GM13977 (cell line): ENCODE measurements at regions of chr9 and their contacts with region 1.

Region 1: DNA sequence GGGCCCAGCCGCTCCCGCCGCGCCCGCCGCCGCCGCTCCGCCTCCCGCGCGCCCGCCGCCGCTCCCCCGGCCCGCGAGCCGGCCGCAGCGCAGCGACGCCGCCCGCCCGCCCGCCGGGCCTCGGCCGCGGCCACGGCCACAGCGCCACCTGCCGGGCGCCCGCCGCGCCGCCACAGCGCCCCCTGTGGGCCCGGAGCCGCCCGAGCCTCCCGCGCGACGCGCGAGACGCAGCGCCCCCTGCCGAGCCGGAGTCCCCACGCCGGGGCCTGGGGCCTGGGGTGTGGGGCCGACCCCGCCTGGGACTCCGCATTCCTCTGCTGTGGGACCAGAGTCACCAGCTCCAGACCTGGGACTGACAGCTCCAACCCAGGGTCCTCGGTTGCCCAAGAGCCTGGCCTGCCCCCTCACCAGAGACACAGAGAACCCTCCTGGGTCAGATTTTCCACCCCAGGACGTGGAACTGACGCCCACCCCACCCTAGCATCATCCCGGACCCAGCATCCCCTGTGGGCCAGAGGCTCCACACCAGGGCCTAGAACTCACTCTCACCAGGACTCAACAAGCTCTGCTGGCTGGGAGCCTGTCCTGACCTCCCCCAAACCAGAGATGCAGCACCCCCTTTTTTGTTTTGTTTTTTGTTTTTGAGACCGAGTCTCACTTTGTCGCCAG is at the start of gene RAPGEF1:
- DNase-seq: peak; percentile 89
- CTCF ChIP-seq: peak; percentile 100

Region 2: DNA sequence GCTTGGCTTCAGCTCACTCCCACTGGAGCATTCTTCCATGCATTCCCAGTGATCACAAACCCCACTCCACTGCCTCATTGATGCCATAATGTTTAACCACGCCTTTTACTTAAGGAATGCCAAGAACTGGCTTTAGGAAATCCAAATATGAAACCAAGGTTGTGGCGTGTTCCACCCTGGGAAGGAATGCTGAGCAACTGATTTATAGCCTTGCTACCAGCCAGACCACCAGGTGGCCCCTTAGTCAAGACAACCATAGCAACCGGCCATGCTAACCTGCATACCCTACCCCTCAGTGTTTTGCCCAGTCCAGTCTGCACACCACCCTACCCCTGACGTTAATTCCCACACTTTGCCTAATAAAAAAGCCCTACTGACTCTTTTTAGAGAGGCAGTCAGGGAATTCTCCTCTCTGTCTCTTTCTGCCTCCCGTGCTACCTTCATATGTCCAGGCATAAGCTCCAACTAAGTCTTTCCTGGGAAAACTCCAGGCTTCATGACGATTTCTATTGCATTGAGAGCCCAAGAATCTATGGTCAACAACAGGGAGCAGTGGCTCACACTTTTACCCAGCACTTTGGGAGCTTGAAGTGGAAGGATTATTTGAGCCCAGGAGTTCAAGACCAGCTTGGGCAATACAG is 373.2 kb before region 1 on chr9:
- in situ Hi-C with region 1: loop called (anchors 10 kb)
- DNase-seq: no peak
- CTCF ChIP-seq: peak; percentile 35

Region 3: DNA sequence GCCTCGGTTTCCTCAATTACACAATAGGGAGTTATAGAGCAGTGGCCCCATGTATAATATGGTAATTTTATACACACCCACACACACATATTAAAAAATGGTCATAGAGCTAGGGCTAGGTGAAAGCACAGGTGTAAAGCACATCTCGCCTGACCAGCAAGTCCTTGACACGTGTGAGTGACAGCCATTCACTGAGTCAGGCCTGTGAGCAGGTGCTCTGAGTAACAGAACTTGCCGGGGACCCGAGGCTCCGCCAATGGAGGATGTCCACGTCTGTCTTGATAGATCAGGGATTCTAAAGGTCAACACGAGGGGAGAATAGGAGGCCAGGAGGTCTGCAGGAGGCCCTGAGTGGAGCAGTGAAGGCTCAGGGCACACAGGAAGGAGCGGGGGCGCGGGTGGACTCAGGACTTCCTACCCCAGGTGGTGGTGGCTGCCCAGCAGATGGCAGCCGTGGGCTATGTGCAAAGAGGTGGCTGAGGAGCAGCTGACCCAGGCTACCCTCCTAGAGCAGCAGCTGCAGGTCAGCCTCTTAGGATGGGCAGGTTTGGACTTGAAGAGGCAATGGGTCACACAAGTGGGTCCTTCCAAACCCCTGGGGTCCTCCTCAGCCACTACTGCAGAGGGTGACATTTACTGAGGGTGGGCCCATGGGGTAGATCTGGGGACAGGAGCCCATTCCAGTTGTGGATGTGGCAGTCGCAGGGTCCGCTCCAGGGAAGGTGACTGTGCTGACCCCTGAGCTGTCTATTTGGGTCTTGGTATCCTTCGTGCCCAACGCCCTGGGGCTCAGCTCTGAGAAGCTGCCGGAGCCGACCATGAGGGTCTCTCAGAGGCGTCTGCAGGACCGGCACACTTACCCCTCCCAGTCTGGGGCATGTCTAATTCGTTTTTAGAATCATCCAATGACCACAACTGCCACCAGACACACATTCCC is 148.9 kb before region 1 on chr9:
- in situ Hi-C with region 1: loop called (anchors 10 kb)
- DNase-seq: peak; percentile 84
- CTCF ChIP-seq: peak; percentile 90

Region 4: DNA sequence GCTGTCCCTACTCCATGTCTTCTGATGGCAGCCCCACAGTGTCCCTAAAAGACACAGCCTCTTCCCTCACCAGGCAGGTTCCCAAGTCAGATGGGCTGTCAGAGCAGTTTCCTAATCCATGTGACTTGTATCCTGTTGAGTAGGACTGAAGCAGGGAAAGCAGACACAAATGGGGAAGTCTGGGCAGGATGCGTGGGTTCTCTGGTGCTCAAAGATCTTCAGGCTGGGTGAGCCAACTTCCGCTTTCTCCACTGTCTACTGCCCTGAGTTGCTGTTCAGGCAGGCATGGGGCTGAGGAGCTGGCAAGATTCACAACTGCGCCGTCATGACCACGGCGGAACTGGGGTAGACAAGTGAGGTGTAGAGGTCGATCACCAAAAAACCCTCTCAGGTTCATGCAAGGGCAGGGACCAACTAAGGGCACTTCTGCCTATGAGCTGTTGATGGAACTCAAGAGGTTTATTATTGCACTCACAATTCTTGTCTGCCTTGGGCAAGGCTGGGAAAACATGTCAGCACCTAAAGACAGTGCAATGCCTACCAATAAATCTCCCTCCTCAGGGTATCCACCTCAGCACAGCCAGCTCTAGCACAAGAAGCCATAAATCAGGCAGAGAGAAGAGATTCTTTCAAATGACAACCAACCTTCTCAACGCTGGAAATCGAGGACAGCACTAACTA is 83.6 kb before region 1 on chr9:
- in situ Hi-C with region 1: loop called (anchors 10 kb)
- DNase-seq: peak; percentile 48
- CTCF ChIP-seq: no peak

Region 5: GRCh38 chr9:132507746-132508469 is 767.8 kb after region 1 on chr9:
- in situ Hi-C with region 1: no loop called
- DNase-seq: peak; percentile 92
- CTCF ChIP-seq: peak; percentile 80